Esophagus muscularis mucosa (tissue), 4 donors: ENCODE measurements at regions of chr11 and their contacts with region 1.

Region 1: GRCh38 chr11:44621140-44621681 is 55.7 kb downstream of the CD82 start:
- DNase-seq: peak; percentile 93
- H3K4me3 ChIP-seq: peak overlapping the region in 3 of 4 donors; percentile 24 to 40 (median 28)
- H3K27ac ChIP-seq: no peak overlapping the region
- H3K4me1 ChIP-seq: peaks cover 30 to 45% (median 36%) of the 10 kb centered on the region in 4 donors
- H3K27me3 ChIP-seq: no peaks in the 10 kb centered on the region
- CTCF ChIP-seq: peak; percentile 97 to 98 (median 97)
- EP300 ChIP-seq: no peak
- POLR2A ChIP-seq: no peak

Region 2: DNA sequence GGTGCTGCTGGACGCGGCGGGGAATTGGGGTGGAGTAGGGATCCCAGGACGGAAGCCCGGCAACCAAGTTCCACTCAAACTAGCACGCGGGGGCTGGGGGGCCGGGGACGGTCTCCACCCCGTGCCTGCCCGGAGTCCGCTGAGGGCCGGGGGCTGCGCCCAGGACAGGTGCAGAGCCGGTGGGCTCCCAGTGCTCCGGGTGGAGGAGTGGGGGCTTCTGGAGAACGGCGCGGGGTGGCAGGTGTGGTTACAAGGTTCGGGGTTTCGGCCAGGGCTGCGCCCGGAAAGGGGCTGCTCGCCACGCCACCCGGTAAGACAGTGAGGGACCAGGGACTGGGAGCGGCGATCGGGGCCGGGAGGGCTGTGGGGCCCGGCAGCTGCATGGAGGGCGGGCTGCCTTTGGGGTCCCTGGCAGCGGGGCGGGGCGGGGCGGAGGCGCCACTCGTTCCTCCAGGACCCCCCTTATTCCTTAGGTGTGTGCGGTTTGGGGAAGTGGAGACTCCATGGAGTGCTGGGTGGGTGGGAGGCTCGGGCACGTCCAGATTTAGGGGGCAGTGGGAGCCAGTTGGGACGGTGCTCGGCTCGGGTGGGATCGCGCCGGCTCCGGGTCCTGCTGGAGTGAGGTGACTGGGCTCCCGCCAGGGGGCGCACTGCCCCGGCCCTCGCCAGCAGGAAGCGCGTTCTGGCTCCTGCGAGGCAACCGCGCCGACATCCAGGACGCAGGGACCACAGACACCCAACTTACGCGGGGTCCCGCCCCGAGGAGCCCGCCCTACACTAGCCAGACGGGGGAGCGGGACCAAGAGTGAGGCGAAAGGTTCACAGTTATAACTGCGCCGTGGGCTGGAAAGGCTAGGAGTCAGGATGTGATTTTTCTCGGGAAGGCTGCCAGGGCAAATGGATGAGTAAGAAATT is 106.4 kb after region 1 on chr11:
- intact Hi-C with region 1: loop called (anchors 5 kb)
- DNase-seq: peak; percentile 95
- H3K4me3 ChIP-seq: peak overlapping the region; percentile 63 to 93 (median 76)
- H3K27ac ChIP-seq: peak overlapping the region; percentile 88 to 93 (median 88)
- H3K4me1 ChIP-seq: peaks cover 51 to 74% (median 72%) of the 10 kb centered on the region in 4 donors
- H3K27me3 ChIP-seq: no peaks in the 10 kb centered on the region
- CTCF ChIP-seq: peak; percentile 87 to 96 (median 94)
- EP300 ChIP-seq: no peak
- POLR2A ChIP-seq: no peak

Region 3: GRCh38 chr11:44785856-44786606 is 164.8 kb after region 1 on chr11:
- intact Hi-C with region 1: loop called (anchors 10 kb)
- DNase-seq: no peak
- H3K4me3 ChIP-seq: no peak overlapping the region
- H3K27ac ChIP-seq: peak overlapping the region; percentile 18 to 74 (median 66)
- H3K4me1 ChIP-seq: peaks cover 54 to 99% (median 81%) of the 10 kb centered on the region in 4 donors
- H3K27me3 ChIP-seq: no peaks in the 10 kb centered on the region
- CTCF ChIP-seq: peak in 1 of 3 experiments; percentile 22
- EP300 ChIP-seq: no peak
- POLR2A ChIP-seq: no peak

Region 4: DNA sequence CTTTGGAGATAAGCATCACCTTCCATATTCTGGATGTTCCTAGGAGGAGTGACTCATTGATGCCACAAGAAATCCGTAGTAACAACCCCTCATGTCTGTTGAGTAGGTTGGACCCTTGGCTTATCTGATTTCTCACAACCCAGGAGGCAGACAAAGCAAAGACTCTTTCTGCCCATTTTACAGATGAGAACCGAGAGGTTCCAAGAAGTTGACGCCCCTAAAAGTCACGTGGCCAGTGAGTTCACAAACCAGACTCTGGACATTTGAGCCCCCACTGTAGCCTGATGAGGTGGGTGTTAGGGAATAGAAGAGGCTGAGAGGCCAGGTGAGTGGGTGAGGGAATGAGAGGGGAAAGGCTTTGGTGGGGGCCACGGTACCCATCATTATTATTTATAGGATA is 175.8 kb after region 1 on chr11:
- intact Hi-C with region 1: no loop called
- DNase-seq: no peak
- H3K4me3 ChIP-seq: no peak overlapping the region
- H3K27ac ChIP-seq: peak overlapping the region in 2 of 4 donors; percentile 58 to 67
- H3K4me1 ChIP-seq: peaks cover 13 to 86% (median 63%) of the 10 kb centered on the region in 4 donors
- H3K27me3 ChIP-seq: no peaks in the 10 kb centered on the region
- CTCF ChIP-seq: no peak
- EP300 ChIP-seq: no peak
- POLR2A ChIP-seq: no peak

Region 5: DNA sequence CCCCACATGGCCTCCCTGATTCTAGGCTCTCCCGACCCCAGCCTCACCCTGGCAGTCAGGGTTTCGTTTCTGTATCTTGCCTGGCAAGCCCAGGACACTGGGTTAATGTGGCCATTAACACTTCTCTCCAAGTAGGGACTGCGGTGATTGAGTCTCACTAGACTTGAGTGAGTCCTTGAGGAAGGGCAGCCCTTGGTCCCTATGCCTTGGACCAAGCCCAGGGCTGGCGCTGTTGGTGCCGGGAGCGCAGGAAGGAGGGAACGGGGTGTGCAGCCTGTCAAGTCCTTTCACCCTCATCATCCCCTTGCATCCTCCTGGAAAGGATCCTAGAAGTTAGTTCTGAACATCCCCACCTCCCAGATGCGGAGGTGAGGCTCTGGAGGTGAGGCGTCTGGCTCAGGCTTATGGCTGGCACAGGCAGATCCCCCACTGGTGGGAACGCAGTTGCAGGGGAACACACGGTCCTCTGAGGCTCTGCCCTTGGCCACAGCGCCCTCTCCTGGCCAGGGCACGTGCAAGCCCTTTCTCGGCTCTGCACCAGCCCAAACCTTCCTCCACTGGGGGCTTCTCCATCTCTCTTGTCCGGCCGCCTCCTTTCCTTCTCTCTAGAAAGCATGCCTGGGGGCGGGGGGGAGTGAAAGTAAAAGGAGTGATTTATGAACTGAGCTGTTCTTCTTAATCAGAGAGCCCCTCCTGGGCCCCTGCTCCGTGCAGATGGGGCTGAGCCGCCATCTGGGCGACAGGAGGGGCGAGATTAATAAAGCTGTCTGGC is 272.8 kb after region 1 on chr11:
- intact Hi-C with region 1: loop called (anchors 1 kb)
- DNase-seq: no peak
- H3K4me3 ChIP-seq: peak overlapping the region in 2 of 4 donors; percentile 16 to 37
- H3K27ac ChIP-seq: peak overlapping the region; percentile 78 to 86 (median 86)
- H3K4me1 ChIP-seq: peaks cover 17 to 50% (median 39%) of the 10 kb centered on the region in 4 donors
- H3K27me3 ChIP-seq: no peaks in the 10 kb centered on the region
- CTCF ChIP-seq: peak in 2 of 3 experiments; percentile 88 to 95
- EP300 ChIP-seq: no peak
- POLR2A ChIP-seq: no peak

Region 6: DNA sequence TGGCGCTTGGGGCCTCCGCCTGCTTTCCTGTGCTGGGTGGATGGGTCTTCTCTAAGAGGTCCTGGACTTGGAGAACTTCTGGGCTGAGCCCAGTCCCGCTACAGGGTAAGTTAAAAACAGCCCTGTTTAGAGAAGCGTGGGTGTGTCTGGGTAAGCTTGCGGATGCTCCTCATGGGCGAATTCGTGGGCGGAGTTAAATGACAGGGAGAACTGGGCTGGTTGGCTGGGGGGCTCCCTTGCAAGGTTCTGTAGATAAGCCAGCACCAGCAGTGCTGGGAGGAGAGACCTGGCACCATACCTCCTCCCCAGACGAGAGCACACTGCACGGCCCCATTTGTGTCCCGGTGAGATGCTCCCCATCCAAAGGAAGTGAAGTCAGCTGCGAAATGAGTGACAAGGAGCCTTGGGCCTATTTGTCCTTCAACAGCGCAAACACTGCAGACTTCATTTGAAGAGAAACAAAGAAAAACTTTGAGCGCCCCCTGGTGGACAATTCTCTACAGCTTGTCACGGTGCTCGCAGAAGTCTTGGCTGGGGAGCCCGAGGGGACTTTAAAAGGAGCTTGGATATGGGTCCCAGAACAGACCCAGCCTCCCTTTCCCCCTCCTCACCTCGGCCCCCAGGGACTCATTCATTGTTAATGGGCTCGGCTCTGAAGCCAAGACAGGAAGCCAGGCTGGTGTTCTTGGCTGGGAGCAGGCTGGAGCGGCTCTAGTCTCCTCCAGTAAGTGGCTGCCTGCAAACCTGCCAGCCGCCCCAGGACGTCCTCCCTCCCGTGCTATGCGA is 290.0 kb after region 1 on chr11:
- intact Hi-C with region 1: loop called (anchors 2 kb)
- DNase-seq: peak; percentile 98
- H3K4me3 ChIP-seq: no peak overlapping the region
- H3K27ac ChIP-seq: peak overlapping the region; percentile 13 to 45 (median 38)
- H3K4me1 ChIP-seq: peaks cover 17 to 38% (median 30%) of the 10 kb centered on the region in 4 donors
- H3K27me3 ChIP-seq: no peaks in the 10 kb centered on the region
- CTCF ChIP-seq: peak; percentile 81 to 87 (median 85)
- EP300 ChIP-seq: no peak
- POLR2A ChIP-seq: no peak

Region 7: DNA sequence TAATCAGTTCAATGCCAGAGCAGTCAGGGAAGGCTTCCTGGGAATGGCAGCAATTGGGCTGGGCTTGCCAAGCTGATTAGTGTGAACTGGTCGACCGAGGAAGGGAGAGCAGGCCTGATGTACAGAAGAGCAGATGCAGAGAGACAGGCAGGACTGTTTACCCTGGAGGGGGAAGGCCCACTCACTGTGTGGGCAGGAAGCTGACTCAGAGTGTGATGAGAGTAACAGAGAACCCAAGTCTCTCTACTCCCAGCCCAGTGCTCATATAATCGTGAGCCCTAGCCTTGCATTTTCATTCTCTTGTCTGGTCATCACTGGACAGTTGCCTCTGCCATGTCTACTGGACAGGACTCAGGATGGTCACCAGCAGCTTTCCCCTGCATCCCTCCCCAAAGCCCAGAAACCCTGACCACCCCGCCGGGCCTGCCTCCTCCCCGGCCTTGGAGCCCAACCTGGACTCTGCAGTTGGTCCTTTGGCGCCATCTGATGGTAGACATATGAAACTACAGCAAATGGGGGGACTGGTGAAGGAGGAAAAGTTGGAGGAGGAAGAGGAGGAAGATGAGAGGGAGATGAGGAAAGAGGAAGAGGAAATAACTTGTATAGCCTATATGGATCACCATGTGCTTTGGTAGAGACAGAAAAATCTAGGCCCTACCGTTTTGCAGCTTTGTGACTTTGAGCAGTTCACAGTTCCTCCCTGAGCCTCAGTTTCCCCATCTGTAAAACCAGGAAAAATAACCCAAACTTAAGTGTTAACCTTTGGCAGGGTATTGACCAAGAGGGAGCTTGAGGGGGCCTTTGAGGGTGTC is 481.8 kb after region 1 on chr11:
- intact Hi-C with region 1: loop called (anchors 5 kb)
- DNase-seq: peak; percentile 92
- H3K4me3 ChIP-seq: no peak overlapping the region
- H3K27ac ChIP-seq: no peak overlapping the region
- H3K4me1 ChIP-seq: peaks cover 8 to 21% (median 13%) of the 10 kb centered on the region in 4 donors
- H3K27me3 ChIP-seq: peaks cover 0 to 29% (median 0%) of the 10 kb centered on the region in 4 donors
- CTCF ChIP-seq: peak in 2 of 3 experiments; percentile 93 to 94
- EP300 ChIP-seq: no peak
- POLR2A ChIP-seq: no peak